H1 (cell line): ENCODE measurements at regions of chr2 and their contacts with region 1.

Region 1: DNA sequence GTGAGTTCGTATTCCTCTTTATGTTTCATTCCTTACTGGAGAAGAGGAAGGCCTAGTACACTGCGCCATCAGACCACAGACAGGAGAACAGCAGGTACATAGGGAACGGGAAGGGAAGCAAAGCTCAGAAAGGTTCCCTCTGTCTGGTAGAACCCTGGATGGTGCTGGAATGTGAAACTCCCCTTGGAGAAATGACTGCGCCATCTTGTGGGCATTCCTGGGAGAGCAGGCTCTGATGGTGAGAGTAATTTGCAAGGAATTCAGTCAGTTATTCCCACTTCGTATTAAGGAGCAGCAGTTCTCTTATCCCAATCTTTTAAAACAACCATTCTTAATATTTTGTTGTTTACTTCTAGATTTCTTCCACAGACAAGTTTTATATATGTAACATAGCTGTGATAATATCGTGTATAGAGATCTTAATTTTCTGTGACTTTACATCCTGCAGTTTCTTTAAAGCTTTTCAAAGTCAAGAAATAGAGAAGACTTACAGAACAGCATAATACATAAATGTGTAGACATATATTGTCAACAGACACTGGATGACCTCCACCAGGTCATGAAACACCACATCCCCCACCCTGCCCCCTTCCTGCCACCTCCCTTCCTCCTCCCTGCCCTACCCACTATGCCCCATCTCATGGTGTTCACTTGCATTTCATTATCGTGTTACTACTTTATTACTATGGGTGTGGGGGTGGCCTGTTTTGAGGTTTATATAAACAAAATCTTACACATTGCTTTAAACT is 83.9 kb downstream of the ARHGEF4 start:
- DNase-seq: peak; percentile 74 to 96
- H3K4me3 ChIP-seq: no peak overlapping the region
- H3K27ac ChIP-seq: no peak overlapping the region
- H3K4me1 ChIP-seq: peaks cover 0 to 11% (median 0%) of the 10 kb centered on the region in 4 experiments; a peak in 4 of 7 replicates
- H3K27me3 ChIP-seq: peaks cover 0 to 6% (median 0%) of the 10 kb centered on the region in 4 experiments; a peak in 2 of 7 replicates
- CTCF ChIP-seq: peak; percentile 69 to 96 (median 89)
- EP300 ChIP-seq: peak in 1 of 2 experiments; percentile 16; a peak in 1 of 3 replicates
- POLR2A ChIP-seq: no peak
- RAD21 ChIP-seq: peak; percentile 84 to 87

Region 2: DNA sequence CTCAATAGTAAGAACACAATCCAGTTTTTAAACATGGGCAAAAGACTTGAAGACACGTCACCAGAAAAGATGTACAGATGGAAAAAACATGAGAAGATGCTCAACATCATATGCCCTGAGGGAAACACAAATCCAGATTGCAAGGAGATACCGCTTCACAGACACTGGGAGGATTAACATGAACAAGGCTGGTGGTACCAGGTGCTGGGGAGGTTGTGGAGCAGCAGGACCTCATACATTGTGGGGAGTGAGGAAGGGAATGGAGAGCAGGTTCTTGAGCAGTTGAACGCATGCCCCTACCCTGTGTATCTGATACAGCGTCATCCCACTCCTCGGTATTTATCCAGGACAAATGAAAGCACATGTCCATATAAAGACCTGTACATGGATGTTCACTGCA is 11.8 kb before region 1 on chr2:
- CTCF ChIA-PET with region 1: interaction called, 10 read pairs
- POLR2A ChIA-PET with region 1: no interaction called
- DNase-seq: no peak
- H3K4me3 ChIP-seq: no peak overlapping the region
- H3K27ac ChIP-seq: no peak overlapping the region
- H3K4me1 ChIP-seq: peaks cover 0 to 5% (median 0%) of the 10 kb centered on the region in 4 experiments; a peak in 1 of 7 replicates
- H3K27me3 ChIP-seq: no peaks in the 10 kb centered on the region
- CTCF ChIP-seq: no peak
- EP300 ChIP-seq: no peak
- POLR2A ChIP-seq: no peak
- RAD21 ChIP-seq: no peak